ENCODE measurements at regions of chrX and their contacts with region 1.

Region 1: DNA sequence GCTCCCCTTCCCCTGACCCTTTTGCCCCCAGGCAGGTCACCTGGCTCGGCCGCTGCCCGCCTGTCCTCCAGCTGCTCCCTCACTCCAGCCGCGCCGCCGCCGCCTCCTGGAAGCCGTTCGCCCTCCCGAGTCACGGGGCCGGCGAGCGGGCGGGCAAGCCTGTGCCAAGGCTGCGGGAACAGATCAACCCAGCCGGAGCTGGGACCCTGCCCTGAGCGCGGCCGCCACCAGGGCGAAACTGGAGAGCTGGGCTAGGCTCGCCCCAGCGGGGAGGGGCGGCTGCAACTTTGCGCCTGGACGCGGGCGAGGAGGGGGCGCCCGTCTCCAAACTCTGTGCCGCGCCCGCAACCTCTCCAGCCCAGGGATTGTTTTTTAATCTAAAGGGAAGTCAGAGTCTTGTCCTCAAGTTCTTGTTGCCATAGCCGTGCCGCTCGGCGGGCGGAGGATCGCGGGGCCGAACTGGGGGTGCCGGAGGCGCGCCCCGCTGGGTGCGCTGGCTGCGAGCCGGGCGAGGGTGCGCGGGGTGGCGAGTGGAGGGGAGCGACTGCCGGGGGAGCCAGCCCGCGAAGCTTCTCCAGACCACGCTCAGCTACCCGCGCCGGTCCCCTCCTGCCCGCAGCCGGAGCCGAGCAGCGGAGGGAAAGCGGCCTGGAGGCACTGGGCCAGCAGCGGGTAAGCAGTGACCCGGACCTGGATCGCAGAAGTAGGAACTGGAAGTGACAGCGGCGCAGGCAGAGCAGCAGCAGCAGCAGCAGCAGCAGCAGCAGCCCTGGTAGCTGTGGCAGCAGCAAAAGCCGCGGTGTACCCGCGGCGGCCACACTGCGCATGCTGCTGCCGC is 13.4 kb downstream of the ARHGEF6 start:
- DNase-seq: peak; percentile 76
- ATAC-seq: peak; percentile 86 to 91

Region 2: GRCh38 chrX:136711147-136711546 is 56.2 kb before region 1 on chrX:
- intact Hi-C with region 1: loop called in 1 of 2 experiments (anchors 10 kb)
- DNase-seq: peak; percentile 42
- ATAC-seq: peak; percentile 78 to 81

Region 3: DNA sequence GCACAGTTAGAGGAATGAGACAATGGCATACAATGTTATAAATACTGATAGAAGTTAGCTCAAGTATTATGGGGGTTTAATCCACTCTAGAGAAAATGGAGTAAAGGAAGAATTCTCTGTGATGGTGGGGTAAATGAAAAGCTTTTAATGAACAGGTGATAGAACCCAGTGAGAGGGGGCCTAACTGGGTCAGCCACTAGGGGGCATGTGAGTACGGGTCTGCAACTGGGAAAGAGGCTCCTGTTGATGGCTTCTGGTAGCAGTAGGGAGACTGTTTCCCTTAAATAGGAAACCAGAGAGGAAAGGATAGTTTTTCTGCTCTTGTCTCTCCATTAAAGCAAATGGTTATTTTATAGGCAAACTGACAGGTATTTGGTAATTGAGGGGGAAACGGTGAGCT is 399.3 kb after region 1 on chrX:
- intact Hi-C with region 1: no loop called
- DNase-seq: no peak
- ATAC-seq: no peak